Natural killer cell (primary cell): ENCODE measurements at regions of chr5 and their contacts with region 1.

Region 1: DNA sequence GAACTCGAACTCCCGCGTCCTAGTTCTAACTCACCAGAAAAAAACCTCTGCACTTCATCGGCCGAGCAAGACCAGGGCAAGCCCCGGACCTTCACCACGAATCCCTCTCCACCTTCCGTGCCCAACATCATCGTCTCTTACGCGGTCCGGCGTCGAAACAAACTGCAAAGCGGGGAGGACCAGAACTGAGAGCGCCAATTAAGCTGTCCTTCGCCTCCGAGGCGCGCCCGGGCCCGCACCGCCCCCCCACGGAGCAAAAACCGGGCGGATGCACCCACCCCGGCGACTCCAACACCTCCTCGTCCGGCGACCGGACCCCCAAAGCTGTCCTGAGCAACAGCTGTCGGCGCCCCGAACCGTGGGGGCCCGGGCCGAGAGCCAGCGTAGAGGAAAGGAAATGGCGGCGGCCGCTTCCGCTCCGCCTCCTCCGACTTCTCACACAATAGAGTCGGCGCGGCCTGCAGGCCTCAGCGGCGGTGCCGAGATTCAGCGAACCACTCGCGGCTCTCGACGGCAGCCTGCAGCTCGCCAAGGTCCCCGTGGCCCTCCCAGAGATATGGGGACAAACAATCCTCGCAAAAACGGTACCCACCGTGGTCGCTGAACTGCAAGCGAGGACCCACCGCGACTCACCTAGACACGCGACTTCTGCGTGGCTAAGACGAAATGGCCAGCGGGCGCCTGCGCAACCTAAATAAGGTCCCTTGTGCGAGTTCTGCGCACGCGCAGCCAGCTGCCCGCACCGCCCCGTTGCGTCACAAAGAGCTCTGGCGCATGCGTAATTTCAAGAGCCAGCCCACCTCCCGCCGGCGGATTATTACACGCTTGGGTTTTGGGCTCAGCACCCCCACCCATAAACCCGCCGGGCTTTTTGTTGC is at the start of gene HNRNPH1:
- DNase-seq: peak; percentile 98 to 99
- ATAC-seq: peak; percentile 71 to 87 (median 77)
- H3K4me3 ChIP-seq: peak within 1 kb of the TSS; percentile 100
- H3K4me3 Mint-ChIP-seq: peak within 1 kb of the TSS; percentile 97
- H3K27ac ChIP-seq: peak within 1 kb of the TSS; percentile 98
- H3K27ac Mint-ChIP-seq: peak within 1 kb of the TSS; percentile 98 to 99
- H3K4me1 ChIP-seq: peaks cover 27% of the 10 kb centered on the region
- H3K4me1 Mint-ChIP-seq: peaks cover 64% of the 10 kb centered on the region in 2 donors
- H3K27me3 ChIP-seq: no peaks in the 10 kb centered on the region
- H3K27me3 Mint-ChIP-seq: no peaks in the 10 kb centered on the region
- CTCF ChIP-seq: no peak
- total RNA-seq, gene HNRNPH1: 1,749 to 2,212 (median 1,853) TPM

Region 2: GRCh38 chr5:179516221-179516620 is 107.0 kb before region 1 on chr5:
- intact Hi-C with region 1: no loop called
- DNase-seq: no peak
- ATAC-seq: no peak
- H3K4me3 ChIP-seq: no peak overlapping the region
- H3K4me3 Mint-ChIP-seq: no peak overlapping the region
- H3K27ac ChIP-seq: no peak overlapping the region
- H3K27ac Mint-ChIP-seq: no peak overlapping the region
- H3K4me1 ChIP-seq: no peaks in the 10 kb centered on the region
- H3K4me1 Mint-ChIP-seq: no peaks in the 10 kb centered on the region
- H3K27me3 ChIP-seq: no peaks in the 10 kb centered on the region
- H3K27me3 Mint-ChIP-seq: peaks cover 0 to 3% of the 10 kb centered on the region in 2 donors
- CTCF ChIP-seq: no peak

Region 3: DNA sequence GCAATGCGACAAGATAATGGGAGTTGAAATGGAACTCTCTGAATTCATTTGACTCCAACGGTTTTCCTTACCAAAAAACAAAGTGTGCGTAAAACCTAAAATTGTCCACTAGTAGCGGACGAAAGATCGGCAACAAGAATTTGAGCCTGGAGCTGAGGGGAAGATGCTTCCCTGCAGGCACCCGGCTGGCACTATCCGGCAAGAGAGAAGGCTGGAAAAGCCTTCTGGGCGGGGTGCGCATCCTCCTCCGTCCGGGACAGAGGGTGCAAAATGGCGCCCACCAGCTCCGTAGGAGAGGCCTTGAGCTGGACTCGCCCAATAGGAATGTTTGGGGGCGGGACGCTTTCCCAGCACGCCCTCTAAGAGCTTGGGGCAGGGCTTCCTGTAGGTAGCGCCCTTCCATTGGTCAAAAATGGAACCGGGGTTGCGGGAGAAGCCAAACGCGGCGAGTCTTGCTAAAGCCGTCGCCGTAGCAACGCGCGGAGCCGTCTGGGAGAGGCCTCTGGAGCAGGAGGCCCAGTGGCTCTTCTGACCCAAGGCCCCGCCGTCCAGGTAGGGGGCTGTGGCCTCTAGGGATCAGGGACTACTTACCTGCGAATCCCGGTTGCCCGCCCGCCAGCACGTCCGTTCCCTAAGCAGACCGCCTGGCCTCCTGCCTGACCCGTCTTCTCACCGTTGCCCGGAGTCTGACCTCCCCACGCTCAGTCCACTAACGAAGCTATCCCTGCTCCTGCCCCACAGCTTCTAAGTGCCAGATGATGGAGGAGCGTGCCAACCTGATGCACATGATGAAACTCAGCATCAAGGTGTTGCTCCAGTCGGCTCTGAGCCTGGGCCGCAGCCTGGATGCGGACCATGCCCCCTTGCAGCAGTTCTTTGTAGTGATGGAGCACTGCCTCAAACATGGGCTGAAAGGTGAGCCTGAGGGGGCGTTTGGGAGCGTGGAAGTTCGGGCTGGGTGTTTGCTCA is 63.7 kb before region 1 on chr5:
- intact Hi-C with region 1: loop called (anchors 5 kb)
- DNase-seq: peak; percentile 86 to 94
- ATAC-seq: peak; percentile 99 to 100 (median 100)
- H3K4me3 ChIP-seq: peak overlapping the region; percentile 55
- H3K4me3 Mint-ChIP-seq: peak overlapping the region; percentile 96
- H3K27ac ChIP-seq: peak overlapping the region; percentile 61
- H3K27ac Mint-ChIP-seq: peak overlapping the region; percentile 89 to 95
- H3K4me1 ChIP-seq: peaks cover 9% of the 10 kb centered on the region
- H3K4me1 Mint-ChIP-seq: peaks cover 11% of the 10 kb centered on the region in 2 donors
- H3K27me3 ChIP-seq: no peaks in the 10 kb centered on the region
- H3K27me3 Mint-ChIP-seq: no peaks in the 10 kb centered on the region
- CTCF ChIP-seq: no peak

Region 4: GRCh38 chr5:179572386-179572785 is 50.9 kb before region 1 on chr5:
- intact Hi-C with region 1: no loop called
- DNase-seq: no peak
- ATAC-seq: no peak
- H3K4me3 ChIP-seq: no peak overlapping the region
- H3K4me3 Mint-ChIP-seq: no peak overlapping the region
- H3K27ac ChIP-seq: no peak overlapping the region
- H3K27ac Mint-ChIP-seq: no peak overlapping the region
- H3K4me1 ChIP-seq: no peaks in the 10 kb centered on the region
- H3K4me1 Mint-ChIP-seq: peaks cover 0 to 10% of the 10 kb centered on the region in 2 donors
- H3K27me3 ChIP-seq: no peaks in the 10 kb centered on the region
- H3K27me3 Mint-ChIP-seq: no peaks in the 10 kb centered on the region
- CTCF ChIP-seq: no peak

Region 5: GRCh38 chr5:179821581-179822432 is 198.6 kb after region 1 on chr5:
- intact Hi-C with region 1: loop called (anchors 1 kb)
- DNase-seq: peak; percentile 91 to 94
- ATAC-seq: peak; percentile 55 to 82 (median 66)
- H3K4me3 ChIP-seq: peak overlapping the region; percentile 96
- H3K4me3 Mint-ChIP-seq: peak overlapping the region; percentile 96
- H3K27ac ChIP-seq: peak overlapping the region; percentile 100
- H3K27ac Mint-ChIP-seq: peak overlapping the region; percentile 97 to 98
- H3K4me1 ChIP-seq: peaks cover 58% of the 10 kb centered on the region
- H3K4me1 Mint-ChIP-seq: peaks cover 41 to 65% of the 10 kb centered on the region in 2 donors
- H3K27me3 ChIP-seq: no peaks in the 10 kb centered on the region
- H3K27me3 Mint-ChIP-seq: no peaks in the 10 kb centered on the region
- CTCF ChIP-seq: no peak

Region 6: DNA sequence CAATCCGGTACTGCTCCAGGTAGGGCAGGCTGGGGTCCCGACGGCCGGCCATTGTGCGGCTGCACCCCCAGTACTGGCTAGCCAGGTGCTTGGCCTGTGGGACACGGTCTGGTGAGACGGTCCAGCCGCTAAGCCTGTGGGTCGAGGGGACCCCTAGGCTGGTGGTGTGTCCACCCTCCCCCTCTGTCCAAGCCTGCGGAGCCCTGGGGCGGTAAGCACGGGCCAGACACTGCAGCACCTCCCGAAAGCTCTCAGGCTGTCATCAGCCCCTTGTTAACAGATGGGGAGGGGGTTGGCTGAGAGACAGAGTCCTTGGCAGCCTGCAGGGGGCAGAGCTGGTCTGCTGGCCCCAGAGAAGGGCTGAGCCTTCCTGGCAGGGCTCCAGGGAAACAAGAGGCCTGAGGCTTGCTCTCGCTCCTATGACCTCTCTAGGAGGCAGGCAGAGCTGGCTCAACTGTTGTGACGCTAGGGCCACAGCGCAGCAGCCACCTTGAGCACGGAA is 247.2 kb after region 1 on chr5:
- intact Hi-C with region 1: no loop called
- DNase-seq: peak in 1 of 2 donors; percentile 37
- ATAC-seq: no peak
- H3K4me3 ChIP-seq: no peak overlapping the region
- H3K4me3 Mint-ChIP-seq: no peak overlapping the region
- H3K27ac ChIP-seq: no peak overlapping the region
- H3K27ac Mint-ChIP-seq: no peak overlapping the region
- H3K4me1 ChIP-seq: no peaks in the 10 kb centered on the region
- H3K4me1 Mint-ChIP-seq: no peaks in the 10 kb centered on the region
- H3K27me3 ChIP-seq: no peaks in the 10 kb centered on the region
- H3K27me3 Mint-ChIP-seq: no peaks in the 10 kb centered on the region
- CTCF ChIP-seq: no peak

Region 7: GRCh38 chr5:180411948-180412347 is 788.7 kb after region 1 on chr5:
- intact Hi-C with region 1: no loop called
- DNase-seq: no peak
- ATAC-seq: no peak
- H3K4me3 ChIP-seq: no peak overlapping the region
- H3K4me3 Mint-ChIP-seq: no peak overlapping the region
- H3K27ac ChIP-seq: no peak overlapping the region
- H3K27ac Mint-ChIP-seq: no peak overlapping the region
- H3K4me1 ChIP-seq: no peaks in the 10 kb centered on the region
- H3K4me1 Mint-ChIP-seq: no peaks in the 10 kb centered on the region
- H3K27me3 ChIP-seq: peaks cover 2% of the 10 kb centered on the region
- H3K27me3 Mint-ChIP-seq: peaks cover 13 to 19% of the 10 kb centered on the region in 2 donors
- CTCF ChIP-seq: no peak